Astrocyte of the cerebellum (primary cell): ENCODE measurements at regions of chr3 and their contacts with region 1.

Region 1: DNA sequence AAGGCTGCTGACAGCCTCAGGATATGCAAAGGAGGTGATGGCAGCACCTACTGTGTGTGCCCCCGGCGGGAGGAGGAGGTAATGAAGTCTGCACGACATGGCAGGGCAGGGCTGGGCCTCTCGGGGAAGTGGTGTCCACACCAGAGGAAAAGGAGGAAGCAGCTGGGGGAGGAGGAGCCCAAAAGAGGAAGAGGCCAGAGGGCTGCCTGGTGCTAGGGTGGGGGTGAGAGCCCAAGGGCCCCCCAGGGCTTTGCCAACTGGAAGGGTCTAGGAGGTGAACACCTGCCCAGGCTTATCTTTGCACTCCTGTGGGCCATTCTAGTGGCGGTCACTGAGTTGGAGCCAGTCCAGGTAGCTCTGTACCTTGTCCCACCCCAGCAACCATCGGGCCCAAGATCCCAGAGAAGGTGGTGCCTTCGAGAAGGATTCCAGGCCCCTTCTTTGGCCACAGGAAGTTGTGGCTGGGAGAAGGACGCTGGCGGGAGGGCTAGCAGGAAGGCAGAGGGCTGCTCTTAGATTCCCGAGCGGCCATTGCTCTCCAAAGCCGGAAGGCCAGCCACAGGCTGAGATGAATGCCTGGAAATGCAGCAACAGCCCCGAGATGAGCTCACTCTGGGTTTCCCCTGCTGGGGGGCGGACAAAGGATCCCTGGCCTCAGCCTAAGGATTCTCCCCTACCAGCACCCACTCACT is 7.0 kb downstream of the GNAI2 start:
- DNase-seq: no peak
- H3K4me3 ChIP-seq: no peak overlapping the region
- CTCF ChIP-seq: no peak

Region 2: GRCh38 chr3:50112462-50112861 is 130.5 kb before region 1 on chr3:
- in situ Hi-C with region 1: loop called (anchors 5 kb)
- DNase-seq: no peak
- H3K4me3 ChIP-seq: no peak overlapping the region
- CTCF ChIP-seq: no peak

Region 3: GRCh38 chr3:50192689-50193141 is 50.3 kb before region 1 on chr3:
- in situ Hi-C with region 1: loop called (anchors 5 kb)
- DNase-seq: no peak
- H3K4me3 ChIP-seq: no peak overlapping the region
- CTCF ChIP-seq: peak; percentile 96